ENCODE measurements at regions of chr5 and their contacts with region 1.

Region 1: DNA sequence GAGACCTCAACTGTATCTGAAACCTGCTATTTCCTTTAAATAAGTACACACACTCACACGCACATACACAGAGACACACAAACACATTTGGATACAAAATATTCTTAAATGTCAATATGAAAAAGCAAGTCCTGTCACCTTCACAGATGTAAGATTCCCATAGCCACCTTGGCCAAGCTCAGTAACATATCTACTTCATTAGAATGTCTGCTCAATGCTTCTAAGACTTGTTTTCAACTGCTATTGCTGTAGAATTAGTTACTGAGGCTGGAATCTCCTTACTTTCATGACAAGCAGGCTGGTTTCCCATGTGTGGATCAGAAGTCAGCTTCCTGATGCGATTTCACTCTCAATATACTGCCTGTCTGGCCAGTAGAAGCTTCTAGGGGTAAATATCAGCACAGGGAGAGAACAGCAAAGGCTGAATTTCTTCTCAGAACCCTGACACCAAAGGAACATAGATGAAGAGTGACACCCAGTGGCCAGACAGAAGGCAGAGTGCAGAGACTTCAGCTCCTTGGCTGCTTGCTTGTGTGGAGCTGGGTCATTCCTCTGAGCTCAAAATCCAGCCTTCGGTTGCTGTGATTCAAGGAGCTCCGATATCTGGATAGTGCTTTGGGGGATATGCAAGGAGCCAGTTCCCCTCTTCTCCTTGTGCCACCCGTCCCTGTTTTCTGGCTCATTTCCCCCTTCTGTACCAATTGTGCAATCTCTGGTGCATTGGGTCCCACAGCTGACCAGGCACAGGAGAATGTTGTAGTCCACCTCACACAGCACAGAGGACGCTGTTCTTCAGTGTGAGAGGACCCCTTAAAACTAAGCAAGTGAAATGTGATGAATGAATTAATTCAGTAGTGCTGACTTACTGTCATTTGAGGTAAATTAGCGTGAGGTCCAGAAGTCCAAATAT is 26.6 kb upstream of the ABLIM3 start:
- DNase-seq: peak; percentile 77
- H3K4me3 ChIP-seq: no peak overlapping the region
- H3K27ac ChIP-seq: peak overlapping the region; percentile 65
- H3K4me1 ChIP-seq: peaks cover 24% of the 10 kb centered on the region
- H3K27me3 ChIP-seq: no peaks in the 10 kb centered on the region
- CTCF ChIP-seq: peak; percentile 88 to 95

Region 2: DNA sequence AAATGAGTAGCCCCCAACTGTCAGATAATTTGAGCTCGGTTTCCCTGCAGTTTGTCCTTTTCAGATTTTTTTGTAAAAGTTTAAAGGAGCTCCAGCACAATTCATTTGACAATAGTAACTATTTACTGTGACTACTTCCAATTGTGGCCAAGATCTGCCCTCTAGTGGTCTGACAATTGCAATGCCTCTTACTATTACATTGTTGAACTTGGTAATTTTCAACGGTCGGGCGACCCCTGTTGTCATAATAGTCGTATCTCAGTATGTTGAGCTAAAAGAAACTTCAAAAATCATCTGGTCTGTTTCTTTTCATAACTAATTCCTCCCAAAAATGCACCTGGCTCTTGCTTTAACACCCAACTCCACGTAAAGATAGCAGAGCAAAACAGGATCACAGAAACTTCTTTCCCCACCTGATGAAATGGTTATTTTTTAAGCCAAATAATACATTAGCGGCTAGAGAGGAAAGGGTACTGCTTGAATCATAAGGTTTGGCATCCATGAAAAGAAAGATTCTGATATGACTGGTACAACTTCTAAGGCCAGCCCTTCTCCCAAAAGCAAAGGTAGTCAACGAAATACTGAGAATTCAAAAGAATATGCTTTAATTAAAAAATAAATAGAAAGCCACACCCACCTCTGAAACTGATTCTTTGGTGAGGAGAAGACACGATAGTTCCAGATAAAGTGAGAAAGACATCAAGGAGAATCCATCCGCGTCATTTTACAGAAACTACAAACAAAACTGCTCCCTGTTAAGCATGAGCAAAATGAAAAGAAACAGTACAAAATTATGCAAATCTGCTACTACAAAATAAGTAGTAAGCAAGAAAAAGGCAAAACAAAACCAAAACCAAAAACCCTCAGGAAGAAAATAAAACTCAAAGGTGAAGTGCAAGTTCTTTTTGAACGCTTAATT is 383.5 kb before region 1 on chr5:
- CTCF ChIA-PET with region 1: interaction called, 5 read pairs
- dilution Hi-C with region 1: loop called (anchors 5 kb)
- in situ Hi-C with region 1: loop called (anchors 5 to 10 kb)
- intact Hi-C with region 1: loop called (anchors 1 kb)
- DNase-seq: peak; percentile 64
- H3K4me3 ChIP-seq: peak overlapping the region in 1 of 3 experiments; percentile 4
- H3K27ac ChIP-seq: no peak overlapping the region
- H3K4me1 ChIP-seq: peaks cover 6% of the 10 kb centered on the region
- H3K27me3 ChIP-seq: no peaks in the 10 kb centered on the region
- CTCF ChIP-seq: peak; percentile 76 to 98

Region 3: DNA sequence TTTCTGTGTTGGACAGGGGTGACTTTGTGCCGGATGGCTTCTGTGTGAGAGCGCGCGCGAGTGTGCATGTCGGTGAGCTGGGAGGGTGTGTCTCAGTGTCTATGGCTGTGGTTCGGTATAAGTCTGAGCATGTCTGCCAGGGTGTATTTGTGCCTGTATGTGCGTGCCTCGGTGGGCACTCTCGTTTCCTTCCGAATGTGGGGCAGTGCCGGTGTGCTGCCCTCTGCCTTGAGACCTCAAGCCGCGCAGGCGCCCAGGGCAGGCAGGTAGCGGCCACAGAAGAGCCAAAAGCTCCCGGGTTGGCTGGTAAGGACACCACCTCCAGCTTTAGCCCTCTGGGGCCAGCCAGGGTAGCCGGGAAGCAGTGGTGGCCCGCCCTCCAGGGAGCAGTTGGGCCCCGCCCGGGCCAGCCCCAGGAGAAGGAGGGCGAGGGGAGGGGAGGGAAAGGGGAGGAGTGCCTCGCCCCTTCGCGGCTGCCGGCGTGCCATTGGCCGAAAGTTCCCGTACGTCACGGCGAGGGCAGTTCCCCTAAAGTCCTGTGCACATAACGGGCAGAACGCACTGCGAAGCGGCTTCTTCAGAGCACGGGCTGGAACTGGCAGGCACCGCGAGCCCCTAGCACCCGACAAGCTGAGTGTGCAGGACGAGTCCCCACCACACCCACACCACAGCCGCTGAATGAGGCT is 288.5 kb before region 1 on chr5 and contains the start of gene ADRB2:
- CTCF ChIA-PET with region 1: interaction called, 3 read pairs
- dilution Hi-C with region 1: no loop called
- in situ Hi-C with region 1: no loop called
- intact Hi-C with region 1: loop called (anchors 2 kb)
- DNase-seq: peak; percentile 99
- H3K4me3 ChIP-seq: peak within 1 kb of the TSS; percentile 69 to 81 (median 81)
- H3K27ac ChIP-seq: peak within 1 kb of the TSS; percentile 76
- H3K4me1 ChIP-seq: peaks cover 33% of the 10 kb centered on the region
- H3K27me3 ChIP-seq: no peaks in the 10 kb centered on the region
- CTCF ChIP-seq: peak in 1 of 2 donors; percentile 23
- total RNA-seq, gene ADRB2: 4.8 to 14.8 TPM

Region 4: GRCh38 chr5:148998174-148998797 is 116.4 kb before region 1 on chr5:
- CTCF ChIA-PET with region 1: no interaction called
- dilution Hi-C with region 1: no loop called
- in situ Hi-C with region 1: no loop called
- intact Hi-C with region 1: loop called (anchors 1 kb)
- DNase-seq: peak; percentile 74
- H3K4me3 ChIP-seq: no peak overlapping the region
- H3K27ac ChIP-seq: no peak overlapping the region
- H3K4me1 ChIP-seq: peaks cover 31% of the 10 kb centered on the region
- H3K27me3 ChIP-seq: no peaks in the 10 kb centered on the region
- CTCF ChIP-seq: peak; percentile 65 to 67

Region 5: GRCh38 chr5:149049371-149049781 is 65.3 kb before region 1 on chr5:
- CTCF ChIA-PET with region 1: interaction called, 4 read pairs
- dilution Hi-C with region 1: loop called (anchors 5 kb)
- in situ Hi-C with region 1: no loop called
- intact Hi-C with region 1: no loop called
- DNase-seq: no peak
- H3K4me3 ChIP-seq: no peak overlapping the region
- H3K27ac ChIP-seq: no peak overlapping the region
- H3K4me1 ChIP-seq: peaks cover 11% of the 10 kb centered on the region
- H3K27me3 ChIP-seq: no peaks in the 10 kb centered on the region
- CTCF ChIP-seq: no peak

Region 6: GRCh38 chr5:149141224-149141956 is 26.7 kb after region 1 on chr5 and contains the start of gene ABLIM3:
- CTCF ChIA-PET with region 1: no interaction called
- dilution Hi-C with region 1: no loop called
- in situ Hi-C with region 1: no loop called
- intact Hi-C with region 1: loop called (anchors 1 kb)
- DNase-seq: peak; percentile 74
- H3K4me3 ChIP-seq: peak within 1 kb of the TSS; percentile 73 to 84 (median 82)
- H3K27ac ChIP-seq: peak within 1 kb of the TSS; percentile 43
- H3K4me1 ChIP-seq: peaks cover 12% of the 10 kb centered on the region
- H3K27me3 ChIP-seq: no peaks in the 10 kb centered on the region
- CTCF ChIP-seq: peak; percentile 75 to 85
- total RNA-seq, gene ABLIM3: 17.3 to 38.6 TPM